ENCODE measurements at regions of chr20 and their contacts with region 1.

Region 1: GRCh38 chr20:6418732-6419131 is 295.9 kb upstream of the FERMT1 start:
- DNase-seq: peak; percentile 8
- ATAC-seq: no peak
- H3K4me3 ChIP-seq: no peak overlapping the region
- H3K27ac ChIP-seq: no peak overlapping the region
- H3K4me1 ChIP-seq: no peaks in the 10 kb centered on the region
- H3K27me3 ChIP-seq: no peaks in the 10 kb centered on the region
- CTCF ChIP-seq: no peak

Region 2: DNA sequence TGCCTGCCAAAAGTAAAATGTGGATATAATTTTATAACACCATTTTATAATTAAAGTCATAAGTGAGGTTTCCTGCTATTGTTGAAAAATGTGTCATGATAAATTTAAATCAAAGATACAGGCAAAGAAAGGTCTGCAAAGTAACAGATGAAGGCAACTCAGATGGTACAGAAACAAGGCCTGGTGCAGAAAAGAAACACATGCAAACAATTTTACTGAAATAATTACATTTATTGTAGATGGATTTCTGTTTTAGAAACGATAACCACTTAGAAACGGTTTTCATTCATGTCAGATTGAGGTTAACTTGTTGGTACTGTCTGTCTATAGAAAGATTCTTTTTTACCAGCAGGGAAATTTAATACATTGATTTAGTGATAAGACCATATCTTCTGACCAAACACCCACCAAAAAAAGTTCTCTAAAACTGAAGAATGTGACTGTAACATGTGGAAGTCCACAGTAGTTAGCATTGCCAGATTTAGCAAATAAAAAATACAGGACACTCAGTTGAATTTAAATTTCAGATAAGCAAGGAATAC is 190.4 kb before region 1 on chr20:
- CTCF ChIA-PET with region 1: no interaction called
- POLR2A ChIA-PET with region 1: interaction called, 11 read pairs
- in situ Hi-C with region 1: no loop called
- intact Hi-C with region 1: no loop called
- DNase-seq: no peak
- ATAC-seq: no peak
- H3K4me3 ChIP-seq: no peak overlapping the region
- H3K27ac ChIP-seq: no peak overlapping the region
- H3K4me1 ChIP-seq: no peaks in the 10 kb centered on the region
- H3K27me3 ChIP-seq: no peaks in the 10 kb centered on the region
- CTCF ChIP-seq: no peak

Region 3: DNA sequence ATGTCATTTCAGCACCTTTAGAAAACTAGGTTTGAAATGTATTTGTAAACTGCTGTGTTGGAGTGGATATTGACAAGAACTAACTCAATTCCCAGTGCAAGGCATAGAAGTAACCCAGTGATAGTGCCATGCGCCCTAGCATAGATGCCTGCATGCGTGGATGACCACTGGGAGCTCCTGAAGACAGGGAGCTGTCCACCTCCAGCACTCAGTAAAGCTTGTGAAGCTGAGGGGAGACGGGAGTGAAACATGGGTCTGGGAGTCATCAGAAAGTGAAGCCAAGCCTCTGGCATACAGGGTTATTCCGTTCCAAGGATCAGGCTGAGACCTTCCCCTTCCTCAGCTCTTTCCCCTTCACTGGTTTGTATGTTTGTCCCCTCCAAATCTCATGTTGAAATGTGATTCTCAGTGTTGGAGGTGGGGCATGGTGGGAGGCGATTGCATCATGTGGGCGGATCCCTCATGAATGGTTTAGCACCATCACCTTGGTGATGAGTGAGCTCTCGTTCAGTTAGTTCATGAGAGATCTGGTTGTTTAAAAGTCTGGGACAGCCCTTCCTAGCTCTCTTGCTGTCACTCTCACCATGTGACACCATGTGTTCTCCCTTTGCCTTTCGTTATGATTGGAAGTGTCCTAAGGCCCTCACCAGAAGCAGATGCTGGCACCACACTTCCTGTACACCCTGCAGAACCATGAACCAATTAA is 149.4 kb before region 1 on chr20:
- CTCF ChIA-PET with region 1: no interaction called
- POLR2A ChIA-PET with region 1: no interaction called
- in situ Hi-C with region 1: no loop called
- intact Hi-C with region 1: no loop called
- DNase-seq: no peak
- ATAC-seq: no peak; the same call in 1 of the 2 replicates
- H3K4me3 ChIP-seq: no peak overlapping the region
- H3K27ac ChIP-seq: no peak overlapping the region
- H3K4me1 ChIP-seq: no peaks in the 10 kb centered on the region
- H3K27me3 ChIP-seq: no peaks in the 10 kb centered on the region
- CTCF ChIP-seq: no peak

Region 4: GRCh38 chr20:6450841-6451240 is 32.1 kb after region 1 on chr20:
- CTCF ChIA-PET with region 1: no interaction called
- POLR2A ChIA-PET with region 1: no interaction called
- in situ Hi-C with region 1: no loop called
- intact Hi-C with region 1: no loop called
- DNase-seq: no peak
- ATAC-seq: no peak
- H3K4me3 ChIP-seq: no peak overlapping the region
- H3K27ac ChIP-seq: no peak overlapping the region
- H3K4me1 ChIP-seq: no peaks in the 10 kb centered on the region
- H3K27me3 ChIP-seq: no peaks in the 10 kb centered on the region
- CTCF ChIP-seq: no peak

Measured in Panc1 (cell line).